ENCODE measurements at regions of chr19 and their contacts with region 1.

Region 1: GRCh38 chr19:52139252-52140031 is at the start of gene ZNF616:
- DNase-seq: peak; percentile 50 to 99 (median 84)
- ATAC-seq: peak; percentile 43
- H3K4me3 ChIP-seq: peak within 1 kb of the TSS; percentile 100
- H3K4me3 Mint-ChIP-seq: peak within 1 kb of the TSS; percentile 97
- H3K27ac ChIP-seq: peak within 1 kb of the TSS; percentile 79 to 92
- H3K27ac Mint-ChIP-seq: peak within 1 kb of the TSS; percentile 93
- H3K4me1 ChIP-seq: peaks cover 23% of the 10 kb centered on the region
- H3K4me1 Mint-ChIP-seq: peaks cover 38% of the 10 kb centered on the region
- H3K27me3 ChIP-seq: no peaks in the 10 kb centered on the region
- H3K27me3 Mint-ChIP-seq: no peaks in the 10 kb centered on the region
- CTCF ChIP-seq: peak; percentile 90
- total RNA-seq, gene ZNF616: 0.99 to 1.5 TPM

Region 2: GRCh38 chr19:52171321-52172169 is 32.1 kb after region 1 on chr19 and contains the start of gene ZNF836:
- CTCF ChIA-PET with region 1: interaction called, 8 read pairs
- POLR2A ChIA-PET with region 1: interaction called, 21 read pairs
- intact Hi-C with region 1: loop called (anchors 1 kb)
- DNase-seq: peak; percentile 84 to 97 (median 90)
- ATAC-seq: peak; percentile 92
- H3K4me3 ChIP-seq: peak within 1 kb of the TSS; percentile 79
- H3K4me3 Mint-ChIP-seq: peak within 1 kb of the TSS; percentile 93
- H3K27ac ChIP-seq: peak within 1 kb of the TSS; percentile 82 to 83
- H3K27ac Mint-ChIP-seq: peak within 1 kb of the TSS; percentile 95
- H3K4me1 ChIP-seq: peaks cover 26% of the 10 kb centered on the region
- H3K4me1 Mint-ChIP-seq: peaks cover 36% of the 10 kb centered on the region
- H3K27me3 ChIP-seq: no peaks in the 10 kb centered on the region
- H3K27me3 Mint-ChIP-seq: no peaks in the 10 kb centered on the region
- CTCF ChIP-seq: no peak
- total RNA-seq, gene ZNF836: 24.1 to 26.2 TPM

Region 3: DNA sequence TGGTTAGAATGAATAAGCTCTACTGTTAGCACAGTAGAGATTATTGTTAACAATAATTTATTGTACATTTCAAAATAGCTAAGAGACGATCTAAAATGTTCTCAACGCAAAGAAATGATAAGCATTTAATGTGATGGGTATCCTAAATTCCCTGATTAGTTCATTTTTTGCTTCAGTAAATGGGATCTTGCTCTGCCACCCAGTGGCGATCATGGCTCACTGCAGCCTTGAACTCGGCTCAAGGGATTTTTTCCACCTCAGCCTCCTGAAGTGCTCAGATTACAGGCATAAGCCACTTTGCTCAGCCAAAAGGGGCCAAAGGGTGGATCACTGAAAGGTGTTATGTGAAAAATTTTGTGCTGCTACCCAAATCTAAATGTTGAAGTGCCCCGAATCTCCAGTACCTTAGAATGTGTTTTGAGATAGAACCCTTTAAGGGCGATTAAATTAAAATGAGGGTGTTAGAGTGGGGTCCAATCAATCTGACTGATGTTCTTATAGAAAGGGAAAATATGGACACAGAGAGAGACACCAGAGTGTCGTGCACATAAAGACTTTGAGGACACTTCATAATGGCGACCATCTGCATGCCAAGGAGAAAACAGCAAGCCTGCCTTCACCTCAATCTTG is 98.4 kb after region 1 on chr19:
- CTCF ChIA-PET with region 1: interaction called, 8 read pairs
- POLR2A ChIA-PET with region 1: interaction called, 4 read pairs
- intact Hi-C with region 1: loop called (anchors 1 kb)
- DNase-seq: peak; percentile 25 to 79 (median 46)
- ATAC-seq: peak; percentile 89
- H3K4me3 ChIP-seq: no peak overlapping the region
- H3K4me3 Mint-ChIP-seq: no peak overlapping the region
- H3K27ac ChIP-seq: no peak overlapping the region
- H3K27ac Mint-ChIP-seq: no peak overlapping the region
- H3K4me1 ChIP-seq: no peaks in the 10 kb centered on the region
- H3K4me1 Mint-ChIP-seq: no peaks in the 10 kb centered on the region
- H3K27me3 ChIP-seq: no peaks in the 10 kb centered on the region
- H3K27me3 Mint-ChIP-seq: no peaks in the 10 kb centered on the region
- CTCF ChIP-seq: peak; percentile 96

Region 4: GRCh38 chr19:52269338-52270261 is 130.2 kb after region 1 on chr19 and contains the start of gene ZNF766:
- CTCF ChIA-PET with region 1: no interaction called
- POLR2A ChIA-PET with region 1: no interaction called
- intact Hi-C with region 1: loop called in 1 of 2 experiments (anchors 1 kb)
- DNase-seq: peak; percentile 93 to 99 (median 97)
- ATAC-seq: peak; percentile 98
- H3K4me3 ChIP-seq: peak within 1 kb of the TSS; percentile 100
- H3K4me3 Mint-ChIP-seq: peak within 1 kb of the TSS; percentile 97
- H3K27ac ChIP-seq: peak within 1 kb of the TSS; percentile 95 to 97
- H3K27ac Mint-ChIP-seq: peak within 1 kb of the TSS; percentile 90
- H3K4me1 ChIP-seq: peaks cover 38% of the 10 kb centered on the region
- H3K4me1 Mint-ChIP-seq: peaks cover 46% of the 10 kb centered on the region
- H3K27me3 ChIP-seq: no peaks in the 10 kb centered on the region
- H3K27me3 Mint-ChIP-seq: no peaks in the 10 kb centered on the region
- CTCF ChIP-seq: no peak
- total RNA-seq, gene ZNF766: 39.3 to 43.2 TPM

Measured in CD4-positive, alpha-beta T cell (primary cell).